CD4-positive, alpha-beta T cell (primary cell): ENCODE measurements at regions of chr11 and their contacts with region 1.

Region 1: DNA sequence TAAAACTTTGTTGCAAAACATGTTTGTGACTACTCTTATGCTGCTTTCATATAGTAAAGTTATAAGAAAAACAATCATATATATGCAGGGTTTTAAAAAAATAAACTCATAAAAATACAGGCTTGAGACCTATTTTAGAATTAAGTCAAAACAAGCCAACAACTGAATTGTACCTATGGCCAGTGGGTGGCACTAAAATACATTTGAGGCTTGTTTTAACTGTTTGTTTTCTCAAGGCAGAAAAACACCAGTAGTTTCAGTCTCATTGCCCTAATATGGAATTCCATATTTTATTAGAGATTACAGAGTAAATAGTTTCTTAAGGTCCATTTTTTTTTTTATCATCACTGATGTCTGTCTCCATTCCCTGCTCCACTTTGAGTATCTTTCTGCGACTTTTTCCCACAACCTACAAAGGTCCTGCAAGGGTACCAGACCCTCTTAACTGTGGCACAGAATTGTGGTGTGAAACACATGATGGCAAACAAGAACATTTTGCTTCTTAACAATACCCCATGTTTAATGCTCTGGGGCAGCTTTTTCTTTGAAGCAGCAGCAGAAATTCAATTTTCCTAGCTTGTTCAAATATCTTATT is 8.5 kb upstream of the CCDC89 start:
- DNase-seq: peak in 7 of 14 experiments; percentile 6 to 71 (median 45)
- ATAC-seq: peak; percentile 69
- H3K4me3 ChIP-seq: no peak overlapping the region
- H3K4me3 Mint-ChIP-seq: no peak overlapping the region
- H3K27ac ChIP-seq: no peak overlapping the region
- H3K27ac Mint-ChIP-seq: no peak overlapping the region
- H3K4me1 ChIP-seq: peaks cover 2% of the 10 kb centered on the region
- H3K4me1 Mint-ChIP-seq: peaks cover 12% of the 10 kb centered on the region
- H3K27me3 ChIP-seq: no peaks in the 10 kb centered on the region
- H3K27me3 Mint-ChIP-seq: no peaks in the 10 kb centered on the region
- CTCF ChIP-seq: peak; percentile 82

Region 2: DNA sequence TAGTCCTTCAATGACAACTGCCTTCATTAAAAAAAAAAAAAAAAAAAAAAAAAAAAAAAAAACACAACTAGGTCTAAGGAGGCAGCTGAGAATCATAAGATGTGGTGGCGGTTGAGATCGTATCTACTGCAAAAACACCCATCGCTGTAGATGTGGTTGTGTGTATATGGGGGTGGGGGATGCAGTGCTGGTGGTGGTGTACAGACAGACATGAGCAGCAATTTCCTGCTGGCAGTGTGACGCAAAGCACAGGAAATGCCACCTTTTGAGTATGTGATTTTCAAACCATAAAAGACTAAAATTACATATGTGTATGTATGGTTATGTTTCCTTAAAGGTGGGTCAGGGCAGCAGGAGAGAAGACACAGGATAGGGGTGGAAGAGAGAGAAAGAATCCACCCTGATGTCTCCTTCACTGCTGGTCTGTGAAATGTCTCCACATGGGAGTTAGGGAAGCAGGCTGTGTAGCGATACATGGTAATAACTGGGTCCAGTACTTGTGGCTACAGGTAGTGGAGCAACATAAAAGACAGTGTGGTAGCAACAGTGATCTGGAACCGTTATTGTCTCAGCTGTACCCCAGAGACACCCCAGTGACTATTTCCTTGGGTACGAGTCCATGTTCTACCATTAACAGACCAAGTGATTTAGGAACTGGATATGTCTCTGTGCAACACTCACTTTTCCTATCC is 58.6 kb after region 1 on chr11:
- CTCF ChIA-PET with region 1: interaction called, 4 read pairs
- POLR2A ChIA-PET with region 1: interaction called, 6 read pairs
- intact Hi-C with region 1: loop called in 1 of 2 experiments (anchors 1 kb)
- DNase-seq: peak; percentile 70 to 99 (median 84)
- ATAC-seq: peak; percentile 84
- H3K4me3 ChIP-seq: peak overlapping the region; percentile 32
- H3K4me3 Mint-ChIP-seq: peak overlapping the region; percentile 87
- H3K27ac ChIP-seq: peak overlapping the region; percentile 52 to 66
- H3K27ac Mint-ChIP-seq: peak overlapping the region; percentile 91
- H3K4me1 ChIP-seq: peaks cover 77% of the 10 kb centered on the region
- H3K4me1 Mint-ChIP-seq: peaks cover 95% of the 10 kb centered on the region
- H3K27me3 ChIP-seq: no peaks in the 10 kb centered on the region
- H3K27me3 Mint-ChIP-seq: peaks cover 7% of the 10 kb centered on the region
- CTCF ChIP-seq: peak; percentile 22

Region 3: DNA sequence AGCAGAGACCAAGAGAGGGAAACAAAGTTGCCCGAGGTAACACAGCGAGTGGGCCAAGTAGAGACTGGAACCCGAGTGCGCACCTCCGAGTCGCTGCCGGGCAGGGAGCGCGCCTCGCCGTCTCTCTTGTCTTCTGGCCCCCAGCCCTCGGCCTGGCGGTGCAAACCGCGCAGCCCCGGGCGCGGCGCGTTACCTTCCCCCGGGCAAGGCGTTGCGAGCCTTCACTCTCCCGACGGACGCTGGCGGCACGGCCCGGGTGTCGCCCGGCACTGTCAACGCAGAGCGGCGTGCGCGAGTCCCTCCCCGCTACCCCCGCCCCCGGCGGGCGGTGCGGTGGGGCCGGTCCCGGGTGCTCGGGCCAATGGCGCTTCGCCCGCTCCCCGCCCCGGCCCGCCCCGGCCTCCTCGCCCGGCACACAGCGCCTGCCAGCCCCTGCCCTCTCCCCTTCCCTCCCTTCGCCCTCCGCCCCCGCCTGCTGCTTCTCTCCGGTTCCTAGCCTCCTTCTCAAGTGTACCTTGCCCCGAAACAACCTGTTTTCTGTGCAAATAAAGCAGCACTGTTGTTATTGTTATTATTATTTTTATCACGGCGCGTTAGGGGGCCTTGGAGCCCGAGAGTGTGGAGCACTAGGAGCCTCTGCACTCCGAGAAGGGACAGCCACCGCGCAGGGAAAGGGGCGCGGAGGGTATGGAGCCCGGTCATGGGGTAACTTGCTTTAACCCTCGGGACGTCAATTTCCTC is 116.6 kb after region 1 on chr11 and contains the start of gene SYTL2:
- CTCF ChIA-PET with region 1: interaction called, 4 read pairs
- POLR2A ChIA-PET with region 1: interaction called, 3 read pairs
- intact Hi-C with region 1: loop called in 1 of 2 experiments (anchors 1 kb)
- DNase-seq: peak; percentile 46 to 91 (median 69)
- ATAC-seq: peak; percentile 80
- H3K4me3 ChIP-seq: peak within 1 kb of the TSS; percentile 68
- H3K4me3 Mint-ChIP-seq: peak within 1 kb of the TSS; percentile 96
- H3K27ac ChIP-seq: peak within 1 kb of the TSS in 1 of 2 donors; percentile 43
- H3K27ac Mint-ChIP-seq: peak within 1 kb of the TSS; percentile 89
- H3K4me1 ChIP-seq: peaks cover 37% of the 10 kb centered on the region
- H3K4me1 Mint-ChIP-seq: peaks cover 48% of the 10 kb centered on the region
- H3K27me3 ChIP-seq: no peaks in the 10 kb centered on the region
- H3K27me3 Mint-ChIP-seq: no peaks in the 10 kb centered on the region
- CTCF ChIP-seq: no peak
- total RNA-seq, gene SYTL2: 35.4 to 36.7 TPM

Region 4: GRCh38 chr11:85961930-85962363 is 267.5 kb after region 1 on chr11:
- CTCF ChIA-PET with region 1: no interaction called
- POLR2A ChIA-PET with region 1: no interaction called
- intact Hi-C with region 1: loop called (anchors 10 kb)
- DNase-seq: no peak
- ATAC-seq: no peak
- H3K4me3 ChIP-seq: no peak overlapping the region
- H3K4me3 Mint-ChIP-seq: no peak overlapping the region
- H3K27ac ChIP-seq: no peak overlapping the region
- H3K27ac Mint-ChIP-seq: no peak overlapping the region
- H3K4me1 ChIP-seq: no peaks in the 10 kb centered on the region
- H3K4me1 Mint-ChIP-seq: no peaks in the 10 kb centered on the region
- H3K27me3 ChIP-seq: no peaks in the 10 kb centered on the region
- H3K27me3 Mint-ChIP-seq: no peaks in the 10 kb centered on the region
- CTCF ChIP-seq: no peak